ENCODE measurements at regions of chr1 and their contacts with region 1.

Region 1: DNA sequence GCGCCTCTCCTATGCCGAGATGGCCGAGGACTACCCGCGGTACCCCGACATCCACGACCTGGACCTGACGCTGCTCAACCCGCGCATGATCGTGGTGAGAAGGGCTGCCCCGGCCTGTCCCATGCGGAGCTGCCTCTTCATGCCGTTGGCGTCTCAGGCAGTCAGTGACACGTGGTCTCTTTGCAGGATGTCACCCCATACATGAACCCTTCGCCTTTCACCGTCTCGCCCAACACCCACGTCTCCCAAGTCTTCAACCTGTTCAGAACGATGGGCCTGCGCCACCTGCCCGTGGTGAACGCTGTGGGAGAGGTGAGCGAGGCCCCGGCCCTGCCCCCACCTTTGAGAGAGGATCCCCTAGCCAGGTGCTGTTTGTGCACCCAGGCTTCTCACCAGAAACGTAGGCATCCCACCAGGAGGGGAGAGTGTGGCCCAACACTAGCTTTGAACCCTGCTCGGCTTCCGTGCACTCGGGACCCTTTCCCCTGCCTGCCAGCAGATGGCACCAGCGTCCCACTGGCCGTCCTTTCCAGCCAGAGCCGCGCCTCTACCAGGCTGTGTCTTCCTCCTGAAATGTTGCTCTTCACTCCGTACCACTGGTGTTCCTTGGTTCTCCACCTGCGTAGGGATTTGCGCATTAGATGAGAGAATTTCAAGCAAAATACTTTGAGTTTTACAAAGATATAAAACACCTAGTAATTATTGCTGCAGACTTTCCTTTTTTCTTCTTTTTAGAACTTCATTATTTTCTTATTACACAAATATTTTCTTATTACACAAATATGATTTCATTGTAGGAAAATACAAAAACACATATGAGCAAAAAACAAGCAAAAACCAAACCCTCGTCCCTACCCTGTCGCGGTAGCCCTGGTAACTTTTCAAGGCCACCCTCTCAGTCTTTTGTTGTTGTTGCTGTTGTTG is 9.0 kb downstream of the NPPA start:
- DNase-seq: peak; percentile 70
- H3K4me3 ChIP-seq: no peak overlapping the region
- H3K27ac ChIP-seq: no peak overlapping the region
- H3K4me1 ChIP-seq: no peaks in the 10 kb centered on the region
- H3K27me3 ChIP-seq: no peaks in the 10 kb centered on the region
- CTCF ChIP-seq: peak; percentile 99

Region 2: GRCh38 chr1:11761988-11762406 is 76.6 kb before region 1 on chr1 and contains the start of gene C1orf167:
- intact Hi-C with region 1: no loop called
- DNase-seq: no peak
- H3K4me3 ChIP-seq: no peak within 1 kb of the TSS
- H3K27ac ChIP-seq: no peak within 1 kb of the TSS
- H3K4me1 ChIP-seq: no peaks in the 10 kb centered on the region
- H3K27me3 ChIP-seq: no peaks in the 10 kb centered on the region
- CTCF ChIP-seq: no peak
- total RNA-seq, gene C1orf167: not detected

Region 3: DNA sequence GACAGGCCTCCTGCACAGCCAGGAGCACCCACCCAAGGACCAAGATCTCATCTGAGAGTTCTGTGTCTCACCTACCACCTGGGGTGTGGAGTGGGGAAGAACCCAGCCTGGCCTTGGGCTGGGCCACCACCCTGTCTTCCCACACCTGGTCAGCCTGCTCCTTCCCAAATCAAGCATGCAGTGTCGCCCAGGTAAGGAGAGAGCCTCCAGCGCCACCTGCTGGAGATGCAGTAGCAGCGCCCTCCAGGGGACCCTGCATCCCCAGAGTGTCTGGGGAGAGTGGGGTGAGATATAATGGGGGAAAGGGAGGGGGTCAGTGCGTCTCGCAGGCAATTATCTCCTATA is 55.3 kb after region 1 on chr1:
- intact Hi-C with region 1: loop called (anchors 2 kb)
- DNase-seq: peak; percentile 63
- H3K4me3 ChIP-seq: no peak overlapping the region
- H3K27ac ChIP-seq: no peak overlapping the region
- H3K4me1 ChIP-seq: no peaks in the 10 kb centered on the region
- H3K27me3 ChIP-seq: peaks cover 10% of the 10 kb centered on the region
- CTCF ChIP-seq: peak; percentile 85

Region 4: DNA sequence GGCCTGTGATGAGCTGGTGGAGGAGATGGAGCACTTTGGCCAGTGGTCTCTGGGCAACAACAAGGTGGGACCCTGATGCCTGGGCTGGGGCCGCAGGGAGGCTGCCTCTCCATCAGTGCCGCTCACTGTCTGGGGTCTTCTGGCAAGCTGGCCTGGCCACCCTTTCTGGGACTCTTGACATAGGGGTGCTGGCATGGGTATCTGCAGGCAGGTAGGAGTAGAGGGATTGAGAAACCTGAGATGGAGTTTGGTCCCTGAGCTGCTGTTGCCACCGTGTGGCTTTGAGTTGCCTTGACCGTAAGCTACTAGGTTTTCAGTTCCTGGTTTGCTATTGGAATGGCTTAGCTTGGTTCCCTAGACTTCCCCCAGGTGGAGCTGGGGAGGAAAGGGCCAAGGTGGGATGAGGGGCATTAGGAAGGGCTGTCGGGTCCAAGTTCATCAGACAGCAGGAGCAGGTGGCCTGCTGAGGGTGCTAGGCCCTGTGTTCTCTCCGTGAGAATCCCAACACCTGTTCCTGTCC is 128.5 kb after region 1 on chr1:
- intact Hi-C with region 1: loop called (anchors 5 kb)
- DNase-seq: peak; percentile 49
- H3K4me3 ChIP-seq: no peak overlapping the region
- H3K27ac ChIP-seq: no peak overlapping the region
- H3K4me1 ChIP-seq: no peaks in the 10 kb centered on the region
- H3K27me3 ChIP-seq: no peaks in the 10 kb centered on the region
- CTCF ChIP-seq: peak; percentile 44

Region 5: DNA sequence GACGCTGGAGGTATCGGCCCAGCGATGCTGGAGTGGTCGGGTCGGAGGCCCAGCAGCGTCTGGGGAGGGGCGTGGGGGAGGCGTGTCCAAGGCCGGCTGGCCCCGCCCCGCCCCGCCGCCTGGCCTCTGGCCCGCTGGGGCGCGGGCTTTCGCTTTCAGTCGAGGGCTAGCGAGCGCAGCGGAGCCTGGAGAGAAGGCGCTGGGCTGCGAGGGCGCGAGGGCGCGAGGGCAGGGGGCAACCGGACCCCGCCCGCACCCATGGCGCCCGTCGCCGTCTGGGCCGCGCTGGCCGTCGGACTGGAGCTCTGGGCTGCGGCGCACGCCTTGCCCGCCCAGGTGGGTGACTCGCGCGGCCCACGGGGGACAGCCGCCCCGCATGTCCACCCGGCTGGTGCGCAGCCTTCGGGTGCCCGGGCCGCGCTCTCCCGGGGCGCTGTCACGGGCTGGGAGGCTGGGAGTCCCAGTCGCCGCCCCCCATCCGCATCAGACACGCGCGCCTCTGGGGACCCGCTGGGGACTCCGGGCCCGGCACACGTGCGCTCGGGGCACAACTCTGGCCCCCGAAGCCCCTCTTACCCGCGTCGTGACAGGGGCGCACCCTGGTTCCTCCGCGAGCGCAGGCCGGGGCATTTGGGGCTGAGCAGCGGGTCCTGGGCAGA is 328.4 kb after region 1 on chr1 and contains the start of gene TNFRSF1B:
- intact Hi-C with region 1: no loop called
- DNase-seq: peak; percentile 78
- H3K4me3 ChIP-seq: peak within 1 kb of the TSS; percentile 76
- H3K27ac ChIP-seq: peak within 1 kb of the TSS; percentile 77
- H3K4me1 ChIP-seq: peaks cover 12% of the 10 kb centered on the region
- H3K27me3 ChIP-seq: no peaks in the 10 kb centered on the region
- CTCF ChIP-seq: no peak
- total RNA-seq, gene TNFRSF1B: 27.2 to 28.1 TPM

Region 6: GRCh38 chr1:12454406-12455391 is 616.1 kb after region 1 on chr1:
- intact Hi-C with region 1: no loop called
- DNase-seq: no peak
- H3K4me3 ChIP-seq: no peak overlapping the region
- H3K27ac ChIP-seq: no peak overlapping the region
- H3K4me1 ChIP-seq: no peaks in the 10 kb centered on the region
- H3K27me3 ChIP-seq: no peaks in the 10 kb centered on the region
- CTCF ChIP-seq: no peak